Endothelial cell of umbilical vein (primary cell): ENCODE measurements at regions of chr2 and their contacts with region 1.

Region 1: GRCh38 chr2:186903216-186903615 is 54.2 kb upstream of the ZSWIM2 start:
- DNase-seq: peak; percentile 56
- H3K4me3 ChIP-seq: no peak overlapping the region
- H3K27ac ChIP-seq: no peak overlapping the region
- H3K4me1 ChIP-seq: peaks cover 2% of the 10 kb centered on the region
- H3K27me3 ChIP-seq: no peaks in the 10 kb centered on the region
- CTCF ChIP-seq: peak in 1 of 2 donors; percentile 38
- POLR2A ChIP-seq: no peak

Region 2: GRCh38 chr2:186399082-186399644 is 504.1 kb before region 1 on chr2:
- CTCF ChIA-PET with region 1: no interaction called
- POLR2A ChIA-PET with region 1: no interaction called
- dilution Hi-C with region 1: no loop called
- intact Hi-C with region 1: no loop called
- DNase-seq: no peak
- H3K4me3 ChIP-seq: no peak overlapping the region
- H3K27ac ChIP-seq: no peak overlapping the region
- H3K4me1 ChIP-seq: no peaks in the 10 kb centered on the region
- H3K27me3 ChIP-seq: no peaks in the 10 kb centered on the region
- CTCF ChIP-seq: no peak
- POLR2A ChIP-seq: no peak

Region 3: DNA sequence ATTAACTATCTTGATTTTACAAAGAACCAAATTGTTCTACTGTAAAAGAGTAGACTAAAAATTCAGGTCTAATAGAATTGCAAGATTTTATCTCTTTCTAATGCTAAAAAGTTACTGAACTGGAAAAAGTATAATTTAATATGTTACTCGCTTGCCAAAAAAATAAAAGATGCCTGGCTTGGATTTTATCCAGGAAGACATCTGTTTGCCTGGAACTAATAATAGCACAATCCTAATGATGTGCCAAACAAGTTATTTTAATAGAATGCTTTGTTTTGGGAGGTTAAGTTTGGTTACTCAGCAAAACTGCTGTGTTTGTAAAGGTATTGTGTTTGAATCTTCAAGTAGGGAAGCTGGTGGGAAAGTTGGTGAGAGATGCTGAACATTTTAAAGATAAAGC is 34.9 kb before region 1 on chr2:
- CTCF ChIA-PET with region 1: interaction called, 86 read pairs
- POLR2A ChIA-PET with region 1: no interaction called
- dilution Hi-C with region 1: no loop called
- intact Hi-C with region 1: loop called (anchors 1 kb)
- DNase-seq: peak; percentile 85
- H3K4me3 ChIP-seq: no peak overlapping the region
- H3K27ac ChIP-seq: no peak overlapping the region
- H3K4me1 ChIP-seq: peaks cover 2% of the 10 kb centered on the region
- H3K27me3 ChIP-seq: no peaks in the 10 kb centered on the region
- CTCF ChIP-seq: no peak
- POLR2A ChIP-seq: no peak

Region 4: DNA sequence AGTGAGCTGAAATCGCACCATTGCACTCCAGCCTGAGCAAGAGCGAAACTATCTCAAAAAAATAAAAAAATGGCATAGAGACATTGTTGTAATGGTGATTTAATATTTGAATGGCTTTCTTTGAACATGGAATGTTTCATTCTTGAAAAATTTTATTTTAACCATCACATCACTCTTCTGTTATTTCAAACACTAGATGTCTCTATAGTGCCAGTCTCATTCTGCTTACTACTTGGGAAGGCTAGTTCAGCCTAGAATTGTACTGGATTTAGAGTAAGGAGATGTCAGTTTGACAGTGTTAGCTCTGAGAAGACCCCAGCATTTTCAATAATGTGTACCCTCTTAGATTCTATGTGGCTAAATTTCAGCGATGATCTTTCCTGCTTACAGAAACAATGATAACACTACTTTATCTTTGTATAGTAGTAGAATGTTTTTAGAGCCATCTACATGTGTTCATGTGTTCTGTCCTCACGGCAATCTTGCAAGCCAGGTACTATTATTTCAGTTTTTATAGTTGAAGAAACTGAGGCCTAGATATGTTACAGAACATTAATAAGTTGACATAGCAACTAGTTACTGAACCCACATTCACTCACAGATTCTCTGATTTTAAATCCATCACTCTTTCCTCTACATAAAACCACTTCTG is 88.7 kb after region 1 on chr2:
- CTCF ChIA-PET with region 1: interaction called, 11 read pairs
- POLR2A ChIA-PET with region 1: no interaction called
- dilution Hi-C with region 1: no loop called
- intact Hi-C with region 1: no loop called
- DNase-seq: peak; percentile 74
- H3K4me3 ChIP-seq: no peak overlapping the region
- H3K27ac ChIP-seq: no peak overlapping the region
- H3K4me1 ChIP-seq: peaks cover 25% of the 10 kb centered on the region
- H3K27me3 ChIP-seq: no peaks in the 10 kb centered on the region
- CTCF ChIP-seq: peak; percentile 0 to 9
- POLR2A ChIP-seq: no peak

Region 5: DNA sequence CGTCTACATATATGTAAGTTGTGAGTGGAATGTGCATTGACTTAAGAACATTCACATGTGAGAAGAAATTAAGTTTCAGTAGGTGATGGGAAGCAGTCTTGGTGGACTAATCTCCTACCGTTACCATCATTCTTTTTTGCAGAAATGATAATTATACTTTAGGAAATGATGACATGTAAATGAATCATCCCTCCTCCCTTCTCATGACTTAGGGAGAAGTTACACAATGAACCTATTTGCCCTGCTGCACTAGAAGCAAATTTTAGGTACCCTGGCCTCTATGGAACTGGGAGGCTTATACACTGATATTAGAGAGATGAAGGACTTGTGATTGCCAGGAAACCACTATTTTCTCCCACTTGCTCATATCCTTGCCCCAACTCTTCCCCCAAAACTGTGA is 330.6 kb after region 1 on chr2:
- CTCF ChIA-PET with region 1: no interaction called
- POLR2A ChIA-PET with region 1: no interaction called
- dilution Hi-C with region 1: no loop called
- intact Hi-C with region 1: no loop called
- DNase-seq: peak; percentile 1
- H3K4me3 ChIP-seq: no peak overlapping the region
- H3K27ac ChIP-seq: no peak overlapping the region
- H3K4me1 ChIP-seq: peaks cover 5% of the 10 kb centered on the region
- H3K27me3 ChIP-seq: no peaks in the 10 kb centered on the region
- CTCF ChIP-seq: no peak
- POLR2A ChIP-seq: no peak

Region 6: GRCh38 chr2:187429989-187430388 is 526.8 kb after region 1 on chr2:
- CTCF ChIA-PET with region 1: interaction called, 3 read pairs
- POLR2A ChIA-PET with region 1: no interaction called
- dilution Hi-C with region 1: loop called (anchors 25 kb)
- intact Hi-C with region 1: no loop called
- DNase-seq: peak; percentile 95
- H3K4me3 ChIP-seq: no peak overlapping the region
- H3K27ac ChIP-seq: peak overlapping the region; percentile 93
- H3K4me1 ChIP-seq: peaks cover 93% of the 10 kb centered on the region
- H3K27me3 ChIP-seq: no peaks in the 10 kb centered on the region
- CTCF ChIP-seq: no peak
- POLR2A ChIP-seq: no peak

Region 7: GRCh38 chr2:187442378-187442777 is 539.2 kb after region 1 on chr2:
- CTCF ChIA-PET with region 1: interaction called, 27 read pairs
- POLR2A ChIA-PET with region 1: no interaction called
- dilution Hi-C with region 1: loop called (anchors 25 kb)
- intact Hi-C with region 1: no loop called
- DNase-seq: no peak
- H3K4me3 ChIP-seq: peak overlapping the region in 2 of 3 experiments; percentile 60 to 100
- H3K27ac ChIP-seq: peak overlapping the region; percentile 88
- H3K4me1 ChIP-seq: peaks cover 68% of the 10 kb centered on the region
- H3K27me3 ChIP-seq: no peaks in the 10 kb centered on the region
- CTCF ChIP-seq: no peak
- POLR2A ChIP-seq: no peak

Region 8: GRCh38 chr2:187453078-187453641 is 549.9 kb after region 1 on chr2:
- CTCF ChIA-PET with region 1: interaction called, 49 read pairs
- POLR2A ChIA-PET with region 1: interaction called, 4 read pairs
- dilution Hi-C with region 1: loop called (anchors 25 kb)
- intact Hi-C with region 1: loop called (anchors 1 kb)
- DNase-seq: peak; percentile 68
- H3K4me3 ChIP-seq: no peak overlapping the region
- H3K27ac ChIP-seq: no peak overlapping the region
- H3K4me1 ChIP-seq: peaks cover 6% of the 10 kb centered on the region
- H3K27me3 ChIP-seq: no peaks in the 10 kb centered on the region
- CTCF ChIP-seq: peak; percentile 10 to 12
- POLR2A ChIP-seq: no peak

Region 9: DNA sequence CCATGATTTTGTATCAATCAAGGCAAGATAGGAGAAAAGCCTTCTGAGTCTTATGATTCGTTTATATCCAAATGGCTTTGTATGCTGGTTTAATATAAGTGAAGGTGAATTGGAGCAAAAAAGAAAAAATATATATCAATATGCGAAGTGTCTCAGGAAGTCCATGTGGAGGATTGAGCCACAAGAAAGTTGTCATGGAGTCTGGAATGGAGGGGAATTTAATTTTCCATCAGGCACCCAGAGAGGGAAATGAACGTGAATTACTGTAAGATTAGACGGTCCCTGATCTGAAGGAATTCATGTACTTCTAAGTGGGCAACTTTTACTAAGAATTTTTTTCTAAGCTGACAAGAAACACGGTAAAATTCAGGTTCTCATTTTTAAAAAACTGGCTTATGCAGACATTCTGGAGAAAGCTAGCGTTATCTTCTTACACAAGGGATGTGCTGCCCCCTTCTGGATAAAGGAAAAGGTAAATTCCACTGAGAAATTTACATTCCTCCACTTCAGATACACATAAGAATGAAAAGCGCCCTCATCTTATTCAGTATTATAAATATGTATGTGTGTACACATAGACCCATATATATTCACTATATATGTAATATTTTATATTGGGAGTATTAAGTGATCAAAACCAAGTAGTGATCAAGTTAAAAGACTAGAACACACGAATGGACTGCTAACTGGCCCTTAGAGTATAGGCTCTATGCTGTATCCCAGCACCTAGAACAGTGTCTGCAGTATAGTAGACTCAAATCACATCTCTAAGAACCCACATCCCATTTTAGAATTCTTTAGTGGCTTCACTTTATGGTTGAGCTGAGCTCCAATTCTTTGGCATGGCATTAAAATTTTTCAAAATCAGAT is 940.0 kb after region 1 on chr2:
- CTCF ChIA-PET with region 1: no interaction called
- POLR2A ChIA-PET with region 1: no interaction called
- dilution Hi-C with region 1: no loop called
- intact Hi-C with region 1: loop called (anchors 5 kb)
- DNase-seq: peak; percentile 75
- H3K4me3 ChIP-seq: no peak overlapping the region
- H3K27ac ChIP-seq: no peak overlapping the region
- H3K4me1 ChIP-seq: no peaks in the 10 kb centered on the region
- H3K27me3 ChIP-seq: no peaks in the 10 kb centered on the region
- CTCF ChIP-seq: peak; percentile 39 to 43
- POLR2A ChIP-seq: no peak